Activated CD4-positive, alpha-beta T cell treated with anti-CD3 and anti-CD28 coated beads, Interleukin-2, amount 10 ng/mL, durations not matched to agents 24 days and 14 days (primary cell): ENCODE measurements at regions of chr16 and their contacts with region 1.

Region 1: GRCh38 chr16:88650749-88651275 is at the start of gene CYBA:
- DNase-seq: peak; percentile 97
- H3K4me3 Mint-ChIP-seq: peak within 1 kb of the TSS; percentile 90
- H3K27ac Mint-ChIP-seq: peak within 1 kb of the TSS; percentile 96
- H3K4me1 Mint-ChIP-seq: peaks cover 15% of the 10 kb centered on the region
- H3K27me3 Mint-ChIP-seq: no peaks in the 10 kb centered on the region
- total RNA-seq, gene CYBA: 222 and 228 TPM in 2 replicates

Region 2: DNA sequence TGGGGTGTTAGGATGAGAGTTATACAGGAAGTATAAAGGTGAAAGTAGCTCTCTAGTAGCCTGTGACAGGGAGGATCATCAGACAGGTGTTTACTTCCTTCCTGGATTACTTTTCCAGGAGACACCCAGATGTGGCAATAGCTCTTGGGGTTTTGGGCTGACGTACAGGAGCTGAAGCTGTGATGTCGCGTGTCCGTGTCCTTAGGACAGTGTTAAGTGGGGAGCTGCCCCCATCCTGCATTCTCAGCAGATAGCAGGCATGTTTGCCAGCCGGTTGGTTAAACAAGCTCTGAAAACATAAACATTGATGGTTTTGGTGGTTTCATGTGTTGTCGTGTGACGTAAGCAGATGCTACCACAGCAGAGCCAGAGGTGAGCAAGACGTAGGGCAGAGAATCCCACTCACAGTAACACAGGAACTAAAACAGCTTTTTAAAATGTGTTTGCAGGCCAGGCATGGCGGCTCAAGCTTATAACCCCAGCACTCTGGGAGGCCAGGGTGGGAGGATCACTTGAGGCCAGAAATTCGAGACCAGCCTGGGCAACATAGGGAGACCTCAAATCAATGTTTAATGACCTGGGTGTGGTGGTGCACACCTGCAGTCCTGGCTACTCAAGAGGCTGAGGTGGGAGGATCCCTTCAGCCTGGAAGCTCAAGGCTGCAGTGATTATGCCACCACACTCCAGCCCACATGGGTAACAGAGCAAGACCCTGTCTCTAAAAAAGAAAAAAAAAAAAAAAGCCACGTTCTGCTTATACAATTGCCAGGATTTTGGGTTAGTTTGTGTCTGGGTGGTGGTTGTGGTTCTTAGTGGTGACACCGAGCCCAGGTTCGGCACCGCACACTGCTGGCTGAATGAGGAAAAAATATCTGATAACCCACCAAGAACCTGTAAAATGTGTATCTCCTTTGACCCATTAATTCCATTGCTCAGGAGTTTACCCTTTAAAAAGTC is 30.7 kb before region 1 on chr16:
- intact Hi-C with region 1: loop called (anchors 1 kb)
- DNase-seq: peak; percentile 87
- H3K4me3 Mint-ChIP-seq: peak overlapping the region; percentile 38
- H3K27ac Mint-ChIP-seq: peak overlapping the region; percentile 81
- H3K4me1 Mint-ChIP-seq: peaks cover 17% of the 10 kb centered on the region
- H3K27me3 Mint-ChIP-seq: no peaks in the 10 kb centered on the region

Region 3: DNA sequence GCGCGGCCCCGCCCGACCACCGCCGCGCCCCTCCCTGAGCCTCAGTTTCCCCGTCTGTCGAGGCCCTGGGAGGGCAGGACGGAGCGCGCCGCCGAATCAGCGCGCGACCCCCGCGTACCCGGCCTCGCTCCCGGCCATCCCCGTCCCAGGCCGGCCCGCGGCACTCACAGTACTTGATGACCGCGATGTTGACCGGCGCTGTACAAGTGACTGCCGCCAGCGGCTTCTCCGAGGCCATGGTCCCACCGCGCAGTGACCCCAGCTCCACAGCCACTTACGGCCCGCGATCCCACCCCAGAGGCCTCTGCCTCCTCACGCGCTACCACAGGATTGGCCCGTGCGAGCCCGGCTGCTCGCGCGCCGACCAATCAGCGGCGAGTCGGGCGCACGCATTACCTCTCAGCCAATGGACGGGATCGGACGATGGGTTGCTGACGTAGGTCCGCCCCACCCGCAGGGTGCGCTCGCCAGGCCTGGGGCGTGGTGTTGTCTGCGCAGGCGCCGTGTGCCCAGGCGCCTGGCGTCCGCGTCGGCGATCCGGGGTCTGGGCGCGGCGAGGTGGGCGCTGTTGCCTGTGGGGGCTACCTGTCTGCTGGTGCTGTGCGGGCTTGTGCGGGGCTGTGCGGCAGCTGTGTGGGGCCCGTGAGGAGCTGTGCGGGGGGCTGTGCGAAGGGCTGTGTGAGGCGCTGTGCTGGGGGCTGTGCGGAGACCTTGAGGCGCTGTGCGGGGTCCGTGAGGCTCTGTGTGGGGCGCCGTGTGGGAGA is 12.2 kb after region 1 on chr16 and contains the start of gene MVD:
- intact Hi-C with region 1: loop called (anchors 1 kb)
- DNase-seq: peak; percentile 99
- H3K4me3 Mint-ChIP-seq: peak within 1 kb of the TSS; percentile 97
- H3K27ac Mint-ChIP-seq: peak within 1 kb of the TSS; percentile 93
- H3K4me1 Mint-ChIP-seq: peaks cover 23% of the 10 kb centered on the region
- H3K27me3 Mint-ChIP-seq: no peaks in the 10 kb centered on the region
- total RNA-seq, gene MVD: 95.7 and 102 TPM in 2 replicates

Region 4: GRCh38 chr16:88700636-88701482 is 50.0 kb after region 1 on chr16:
- intact Hi-C with region 1: loop called (anchors 2 kb)
- DNase-seq: peak; percentile 98
- H3K4me3 Mint-ChIP-seq: peak overlapping the region; percentile 81
- H3K27ac Mint-ChIP-seq: peak overlapping the region; percentile 95
- H3K4me1 Mint-ChIP-seq: peaks cover 50% of the 10 kb centered on the region
- H3K27me3 Mint-ChIP-seq: no peaks in the 10 kb centered on the region